Activated T-helper 2 cell treated with anti-CD3 and anti-CD28 coated beads, Interferon-gamma antibody, Interleukin-2, Interleukin-4, amounts not matched to agents 10 μg/mL and 5 μg/mL and 100 μg/mL, durations not matched to agents 14 hours and 24 hours and 36 hours (primary cell): ENCODE measurements at regions of chr7 and their contacts with region 1.

Region 1: DNA sequence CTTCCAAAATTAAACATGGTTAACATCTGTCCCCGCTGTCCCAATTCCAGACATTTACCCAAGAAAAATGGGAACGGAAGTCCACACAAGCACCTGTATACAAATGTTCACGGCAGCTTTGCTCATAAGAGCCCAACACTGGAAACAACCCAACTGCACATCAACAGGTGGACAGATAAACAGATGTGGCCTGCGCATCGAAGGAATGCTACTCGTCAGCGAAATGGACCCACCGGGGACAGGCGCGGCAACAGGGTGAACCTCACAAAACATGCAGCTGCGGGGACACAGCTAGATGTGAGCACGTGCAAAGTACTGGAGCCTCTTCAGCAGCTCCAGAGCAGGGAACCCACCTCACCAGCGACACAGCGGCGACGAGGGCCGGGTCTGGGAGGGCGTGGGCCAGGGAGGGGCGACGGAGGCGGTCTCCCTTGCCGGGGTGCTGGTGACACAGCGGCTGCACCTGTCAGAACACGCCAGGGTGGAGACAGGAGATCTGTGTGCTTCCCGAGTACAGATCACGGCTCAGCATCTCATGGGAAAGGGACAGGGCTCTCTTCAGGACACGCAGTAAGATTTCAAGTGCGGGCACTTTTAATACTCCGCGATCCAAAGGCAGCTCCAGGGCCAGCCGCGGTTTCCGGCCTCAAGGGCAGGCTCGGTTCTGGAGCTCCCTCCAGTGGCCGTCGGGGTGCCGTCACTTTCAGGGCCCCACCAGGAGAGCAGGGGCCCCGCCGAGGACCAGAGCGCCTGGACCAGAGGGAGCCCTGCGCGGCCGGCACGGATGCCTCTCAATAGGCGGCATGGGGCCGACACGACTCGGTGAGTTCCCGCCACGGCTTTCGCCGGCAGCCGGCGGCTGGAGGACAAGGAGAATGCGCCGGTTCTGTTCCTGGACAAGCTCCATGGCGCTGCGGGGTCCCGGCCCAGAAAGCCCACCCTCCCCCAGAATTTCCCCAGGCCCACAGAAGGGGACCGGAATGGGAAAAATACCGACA is 21.2 kb downstream of the GPR146 start:
- DNase-seq: peak; percentile 77
- H3K4me3 Mint-ChIP-seq: no peak overlapping the region
- H3K27ac Mint-ChIP-seq: no peak overlapping the region
- H3K4me1 Mint-ChIP-seq: peaks cover 1% of the 10 kb centered on the region
- H3K27me3 Mint-ChIP-seq: peaks cover 3% of the 10 kb centered on the region

Region 2: DNA sequence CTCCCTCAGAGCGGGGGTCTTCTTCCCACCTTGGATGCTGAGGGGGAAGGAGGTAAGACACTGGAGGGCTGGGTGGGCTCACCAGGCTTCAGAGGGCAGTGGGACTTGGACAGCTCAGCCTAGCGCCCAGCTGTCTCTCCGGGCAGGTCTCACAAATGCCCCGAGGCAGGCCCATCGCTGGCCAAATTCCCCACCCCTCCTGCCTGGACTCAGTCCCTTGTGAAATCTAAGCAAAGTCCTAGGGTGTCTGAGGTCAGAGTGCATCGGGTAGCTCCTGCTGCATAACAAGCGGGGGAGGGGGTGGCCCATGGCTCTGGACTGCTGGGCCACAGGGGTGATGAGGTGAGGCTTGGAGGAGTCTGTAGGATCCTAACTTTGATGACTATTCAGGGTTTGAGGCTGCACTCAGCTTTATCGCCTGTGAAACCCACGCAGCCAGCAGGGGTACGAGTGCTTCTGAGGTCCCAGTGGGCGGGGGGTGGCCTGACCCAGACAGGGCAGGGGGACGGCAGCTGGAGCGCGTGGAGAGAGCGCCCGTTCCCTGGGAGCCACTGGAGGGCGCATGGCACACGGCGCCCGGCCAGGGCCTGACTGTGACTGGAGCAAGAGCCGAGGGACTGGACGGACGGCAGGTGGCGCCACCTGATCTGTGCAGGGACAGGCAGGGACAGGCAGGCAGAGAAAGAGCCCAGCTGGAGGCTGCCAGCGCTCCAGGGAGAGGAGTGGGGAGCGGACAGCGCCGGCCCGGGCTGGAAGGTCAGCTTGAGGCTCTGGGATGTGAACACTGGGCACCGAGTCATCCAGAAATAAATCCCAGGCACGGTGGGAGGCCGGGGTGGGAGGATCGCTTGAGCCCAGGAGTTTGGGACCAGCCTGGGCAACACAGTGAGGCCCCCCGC is 72.6 kb before region 1 on chr7:
- intact Hi-C with region 1: loop called (anchors 1 kb)
- DNase-seq: peak; percentile 86
- H3K4me3 Mint-ChIP-seq: no peak overlapping the region
- H3K27ac Mint-ChIP-seq: no peak overlapping the region
- H3K4me1 Mint-ChIP-seq: peaks cover 2% of the 10 kb centered on the region
- H3K27me3 Mint-ChIP-seq: no peaks in the 10 kb centered on the region

Region 3: DNA sequence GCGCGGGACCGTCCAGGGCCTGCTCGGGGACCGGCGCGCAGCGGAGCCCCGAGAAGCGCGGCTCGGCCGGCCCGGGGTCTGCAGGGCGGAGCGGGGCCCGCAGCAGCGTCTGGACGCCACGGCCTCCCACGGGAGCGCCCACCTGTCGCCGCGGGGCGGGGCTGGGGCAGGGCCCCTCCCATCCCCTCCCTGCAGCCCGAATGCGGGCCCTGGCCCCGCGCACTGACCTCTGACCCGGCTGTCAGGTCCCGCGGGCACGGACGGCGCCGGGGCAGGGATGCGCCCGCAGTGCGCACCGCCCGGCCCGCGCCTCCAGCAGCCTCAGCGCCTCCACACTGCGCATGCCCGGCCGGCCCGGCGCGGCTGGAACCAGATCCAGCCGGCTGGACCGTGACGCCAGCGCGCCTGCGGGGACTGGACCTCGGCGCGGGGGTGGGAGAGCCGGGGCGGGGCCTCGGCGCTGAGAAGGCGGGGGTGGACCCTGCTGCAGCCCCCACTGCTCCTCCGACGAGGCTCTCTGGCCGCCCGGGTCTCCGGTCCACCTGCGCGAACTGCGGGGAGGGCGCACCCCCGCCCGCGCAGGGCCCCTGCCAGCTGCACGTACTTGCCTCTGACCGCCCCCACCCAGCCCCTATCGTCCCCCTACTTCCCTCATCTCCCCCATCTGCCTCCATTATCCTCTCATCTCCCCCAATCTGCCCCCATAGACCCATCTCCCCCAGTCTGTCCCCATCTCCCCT is 37.4 kb before region 1 on chr7:
- intact Hi-C with region 1: loop called (anchors 2 kb)
- DNase-seq: peak; percentile 80
- H3K4me3 Mint-ChIP-seq: peak overlapping the region; percentile 79
- H3K27ac Mint-ChIP-seq: peak overlapping the region; percentile 89
- H3K4me1 Mint-ChIP-seq: peaks cover 25% of the 10 kb centered on the region
- H3K27me3 Mint-ChIP-seq: no peaks in the 10 kb centered on the region

Region 4: DNA sequence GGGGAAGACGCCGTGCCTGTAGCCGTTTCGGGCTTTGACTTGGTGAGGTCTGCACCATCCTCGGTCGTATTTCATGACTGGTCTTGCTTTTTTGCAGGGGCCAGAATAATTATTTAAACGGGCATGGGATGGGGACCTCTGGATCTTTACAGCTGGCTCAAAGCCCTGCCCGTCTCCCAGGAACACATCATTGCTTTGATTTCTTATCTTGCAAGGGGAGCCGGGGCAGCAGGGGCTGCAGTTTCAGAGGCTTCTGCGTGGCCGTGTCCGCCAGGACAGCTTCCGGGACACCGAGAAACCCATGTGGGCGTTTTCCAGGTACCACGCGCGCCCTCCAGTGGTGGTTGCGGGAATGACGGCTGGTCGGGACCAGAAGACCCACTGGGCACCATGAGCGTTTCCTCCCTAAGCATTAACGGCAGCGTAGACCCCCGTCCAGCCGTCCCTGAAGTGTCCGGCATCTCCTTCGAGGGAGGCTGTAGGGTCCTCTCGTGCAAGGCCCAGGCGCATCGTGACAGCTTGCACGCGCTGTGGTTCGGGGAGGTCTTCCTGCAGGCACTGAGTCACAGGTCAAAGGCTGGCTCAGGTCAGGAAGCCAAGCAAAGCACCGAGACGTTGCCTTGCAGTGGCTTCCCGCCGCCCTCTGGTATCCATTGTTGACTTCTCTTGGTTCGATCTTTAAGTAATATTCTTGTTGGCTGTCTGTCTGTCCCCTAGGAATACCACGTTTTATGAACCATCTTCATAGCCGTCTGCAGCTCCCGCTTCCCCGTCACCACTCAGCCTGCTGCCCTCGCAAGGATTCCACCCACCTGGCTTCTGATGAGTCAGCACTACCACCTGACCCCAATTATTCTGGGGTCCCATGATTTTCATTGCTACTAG is 110.6 kb after region 1 on chr7:
- intact Hi-C with region 1: no loop called
- DNase-seq: peak; percentile 74
- H3K4me3 Mint-ChIP-seq: peak overlapping the region; percentile 17
- H3K27ac Mint-ChIP-seq: peak overlapping the region; percentile 49
- H3K4me1 Mint-ChIP-seq: peaks cover 14% of the 10 kb centered on the region
- H3K27me3 Mint-ChIP-seq: no peaks in the 10 kb centered on the region